Spleen (tissue), 13 donors: ENCODE measurements at regions of chr7 and their contacts with region 1.

Region 1: DNA sequence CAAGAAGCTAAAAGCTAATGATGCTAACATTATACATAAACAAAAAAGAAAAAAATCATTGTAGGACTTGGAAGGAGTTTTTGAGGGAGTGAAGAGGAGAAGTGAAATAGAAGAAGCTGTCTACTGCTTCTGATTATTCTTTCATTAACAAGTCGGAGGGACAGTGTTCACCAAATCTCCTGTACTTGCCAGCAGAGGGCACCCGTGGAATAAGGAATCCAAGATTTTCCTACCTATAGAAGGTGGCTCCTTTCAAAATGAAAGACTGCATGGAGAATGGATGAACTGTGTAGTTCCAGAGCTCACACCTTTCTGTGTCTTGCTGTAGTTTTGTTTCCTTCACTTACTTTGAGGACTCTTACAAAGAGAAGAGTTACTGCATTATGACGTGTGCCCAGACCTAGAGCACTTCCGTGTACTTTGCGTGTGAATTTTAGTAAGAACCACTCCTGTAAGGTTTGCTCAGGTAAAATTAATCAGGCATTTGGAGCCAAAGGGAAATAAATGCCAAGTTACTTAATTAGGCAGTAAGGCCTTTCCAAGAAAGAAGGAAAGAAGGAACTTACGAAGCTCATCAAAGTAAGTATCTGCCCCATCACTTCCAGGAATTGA is 145.1 kb downstream of the SEMA3D start:
- DNase-seq: peak; percentile 65
- H3K4me3 ChIP-seq: no peak overlapping the region
- H3K27ac ChIP-seq: peak overlapping the region in 1 of 8 donors; percentile 3
- H3K4me1 ChIP-seq: peaks cover 0 to 11% (median 0%) of the 10 kb centered on the region in 6 donors
- H3K27me3 ChIP-seq: no peaks in the 10 kb centered on the region
- CTCF ChIP-seq: peak; percentile 13 to 70 (median 54)
- POLR2A ChIP-seq: no peak

Region 2: DNA sequence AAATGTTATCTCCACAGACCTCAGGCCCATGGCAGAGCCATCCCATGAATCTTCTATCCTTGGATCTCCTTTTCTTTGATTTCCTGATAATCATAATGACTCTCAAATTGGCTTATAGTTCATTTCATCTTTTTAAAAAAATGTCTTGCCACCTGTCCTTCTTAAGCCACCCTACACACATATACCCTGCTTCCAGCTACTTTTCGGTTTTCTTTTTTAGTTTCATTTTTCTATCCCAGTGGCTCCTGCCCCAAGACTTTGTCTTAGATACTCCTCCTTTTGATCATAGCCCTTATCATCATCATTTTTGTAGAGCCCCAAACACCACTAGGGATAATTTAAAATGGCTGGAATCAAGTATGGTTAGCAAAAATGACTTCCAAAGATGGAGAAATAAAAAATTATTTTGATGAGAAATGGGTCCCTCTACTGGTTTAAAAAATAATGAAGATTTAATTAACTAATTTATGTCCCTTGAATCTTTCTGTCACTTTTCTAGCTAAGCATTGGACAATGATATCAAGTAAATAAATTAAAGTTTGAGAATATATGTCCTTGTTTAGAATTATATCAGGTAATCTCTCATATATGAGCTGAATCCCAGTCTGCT is 422.4 kb after region 1 on chr7:
- intact Hi-C with region 1: loop called (anchors 5 kb)
- DNase-seq: no peak
- H3K4me3 ChIP-seq: no peak overlapping the region
- H3K27ac ChIP-seq: no peak overlapping the region
- H3K4me1 ChIP-seq: no peaks in the 10 kb centered on the region
- H3K27me3 ChIP-seq: no peaks in the 10 kb centered on the region
- CTCF ChIP-seq: peak in 3 of 11 experiments; percentile 18 to 37 (median 32)
- POLR2A ChIP-seq: no peak

Region 3: GRCh38 chr7:85554236-85555178 is 512.8 kb after region 1 on chr7:
- intact Hi-C with region 1: loop called (anchors 10 kb)
- DNase-seq: no peak
- H3K4me3 ChIP-seq: no peak overlapping the region
- H3K27ac ChIP-seq: no peak overlapping the region
- H3K4me1 ChIP-seq: peaks cover 0 to 3% (median 0%) of the 10 kb centered on the region in 6 donors
- H3K27me3 ChIP-seq: no peaks in the 10 kb centered on the region
- CTCF ChIP-seq: peak; percentile 16 to 77 (median 66)
- POLR2A ChIP-seq: no peak